ENCODE measurements at regions of chr6 and their contacts with region 1.

Region 1: DNA sequence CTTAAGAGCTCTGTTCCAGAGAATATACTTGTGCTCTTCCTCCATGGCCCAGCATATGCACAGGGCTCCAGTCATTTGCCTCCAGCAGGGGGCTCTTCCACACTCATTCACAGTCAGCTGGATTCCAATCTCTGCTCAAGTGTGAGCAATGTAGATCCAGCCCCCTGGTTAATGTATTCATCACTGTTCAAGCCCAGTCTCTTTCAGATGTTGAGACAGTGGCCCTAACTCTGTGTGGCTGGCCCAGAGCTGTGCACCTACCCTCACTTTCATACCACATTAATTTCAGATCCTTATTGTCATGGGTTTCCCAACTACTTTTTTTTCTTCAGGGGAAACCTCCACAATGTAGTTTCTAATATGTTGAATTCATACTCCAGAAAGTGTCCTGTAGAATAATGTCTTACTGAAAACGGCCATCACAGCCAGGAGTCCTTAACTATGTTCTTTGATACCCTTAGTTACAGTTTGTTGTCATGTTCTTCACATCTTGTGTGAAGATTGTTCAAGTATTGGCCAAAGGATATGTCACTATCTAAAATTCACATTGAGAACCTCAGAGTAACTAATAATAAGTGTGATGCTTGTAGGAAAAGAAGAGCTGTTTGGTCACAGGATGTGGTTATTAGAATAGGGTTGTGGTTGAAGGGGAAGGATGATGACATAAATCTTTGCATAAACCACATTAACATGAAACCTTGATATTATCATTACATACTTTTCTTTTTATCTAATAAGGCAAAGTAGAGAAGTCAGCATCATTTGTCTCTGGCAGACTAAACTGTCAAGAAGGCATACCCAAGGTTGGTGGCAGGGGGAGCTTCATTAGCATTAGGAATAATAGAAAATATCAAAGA is 14.4 kb upstream of the HLA-DQA1 start:
- DNase-seq: peak; percentile 56
- H3K4me3 Mint-ChIP-seq: peak overlapping the region; percentile 24
- H3K27ac Mint-ChIP-seq: peak overlapping the region; percentile 90
- H3K4me1 Mint-ChIP-seq: peaks cover 32% of the 10 kb centered on the region
- H3K27me3 Mint-ChIP-seq: no peaks in the 10 kb centered on the region

Region 2: GRCh38 chr6:32255199-32256153 is 367.3 kb before region 1 on chr6:
- CTCF ChIA-PET with region 1: no interaction called
- intact Hi-C with region 1: loop called (anchors 10 kb)
- DNase-seq: peak; percentile 83
- H3K4me3 Mint-ChIP-seq: peak overlapping the region; percentile 34
- H3K27ac Mint-ChIP-seq: peak overlapping the region; percentile 31
- H3K4me1 Mint-ChIP-seq: peaks cover 26% of the 10 kb centered on the region
- H3K27me3 Mint-ChIP-seq: no peaks in the 10 kb centered on the region

Region 3: GRCh38 chr6:32609731-32610640 is 12.8 kb before region 1 on chr6:
- CTCF ChIA-PET with region 1: interaction called, 3 read pairs
- intact Hi-C with region 1: loop called (anchors 1 kb)
- DNase-seq: peak; percentile 69
- H3K4me3 Mint-ChIP-seq: no peak overlapping the region
- H3K27ac Mint-ChIP-seq: no peak overlapping the region
- H3K4me1 Mint-ChIP-seq: peaks cover 14% of the 10 kb centered on the region
- H3K27me3 Mint-ChIP-seq: no peaks in the 10 kb centered on the region

Region 4: GRCh38 chr6:32666420-32667300 is 43.9 kb after region 1 on chr6 and contains the start of gene HLA-DQB1:
- CTCF ChIA-PET with region 1: no interaction called
- intact Hi-C with region 1: loop called (anchors 2 kb)
- DNase-seq: peak; percentile 80
- H3K4me3 Mint-ChIP-seq: peak within 1 kb of the TSS; percentile 70
- H3K27ac Mint-ChIP-seq: no peak within 1 kb of the TSS
- H3K4me1 Mint-ChIP-seq: peaks cover 40% of the 10 kb centered on the region
- H3K27me3 Mint-ChIP-seq: peaks cover 32% of the 10 kb centered on the region
- total RNA-seq, gene HLA-DQB1: 6.2 to 7.4 TPM

Region 5: GRCh38 chr6:32685603-32686002 is 62.8 kb after region 1 on chr6:
- CTCF ChIA-PET with region 1: no interaction called
- intact Hi-C with region 1: loop called (anchors 1 kb)
- DNase-seq: peak; percentile 30
- H3K4me3 Mint-ChIP-seq: no peak overlapping the region
- H3K27ac Mint-ChIP-seq: no peak overlapping the region
- H3K4me1 Mint-ChIP-seq: peaks cover 18% of the 10 kb centered on the region
- H3K27me3 Mint-ChIP-seq: no peaks in the 10 kb centered on the region

Region 6: DNA sequence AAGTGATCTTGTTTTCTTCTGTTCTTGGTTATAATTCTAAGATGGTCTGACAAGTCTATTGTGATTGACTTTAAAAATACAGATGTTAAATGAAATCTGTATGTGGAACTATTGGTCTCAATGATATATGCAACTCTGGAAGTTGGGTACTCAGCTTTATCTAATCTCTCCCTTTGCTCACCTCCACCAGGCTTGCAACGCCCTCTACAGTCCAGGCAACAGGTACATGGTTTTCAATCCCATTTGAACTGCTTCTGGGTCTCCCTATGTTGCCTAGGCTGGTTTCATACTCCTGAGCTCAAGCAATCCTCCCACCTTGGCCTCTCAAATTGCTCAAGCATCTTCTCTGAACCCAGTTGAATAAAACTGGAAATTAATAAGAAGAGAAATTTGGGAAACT is 69.2 kb after region 1 on chr6:
- CTCF ChIA-PET with region 1: no interaction called
- intact Hi-C with region 1: loop called (anchors 2 kb)
- DNase-seq: peak; percentile 81
- H3K4me3 Mint-ChIP-seq: no peak overlapping the region
- H3K27ac Mint-ChIP-seq: no peak overlapping the region
- H3K4me1 Mint-ChIP-seq: peaks cover 3% of the 10 kb centered on the region
- H3K27me3 Mint-ChIP-seq: peaks cover 9% of the 10 kb centered on the region

Region 7: GRCh38 chr6:32940656-32941213 is 318.0 kb after region 1 on chr6 and contains the start of gene HLA-DMB:
- CTCF ChIA-PET with region 1: no interaction called
- intact Hi-C with region 1: no loop called
- DNase-seq: peak; percentile 65
- H3K4me3 Mint-ChIP-seq: peak within 1 kb of the TSS; percentile 79
- H3K27ac Mint-ChIP-seq: peak within 1 kb of the TSS; percentile 78
- H3K4me1 Mint-ChIP-seq: peaks cover 57% of the 10 kb centered on the region
- H3K27me3 Mint-ChIP-seq: no peaks in the 10 kb centered on the region
- total RNA-seq, gene HLA-DMB: 0.76 to 1.3 TPM